PC-3 (cell line): ENCODE measurements at regions of chr12 and their contacts with region 1.

Region 1: DNA sequence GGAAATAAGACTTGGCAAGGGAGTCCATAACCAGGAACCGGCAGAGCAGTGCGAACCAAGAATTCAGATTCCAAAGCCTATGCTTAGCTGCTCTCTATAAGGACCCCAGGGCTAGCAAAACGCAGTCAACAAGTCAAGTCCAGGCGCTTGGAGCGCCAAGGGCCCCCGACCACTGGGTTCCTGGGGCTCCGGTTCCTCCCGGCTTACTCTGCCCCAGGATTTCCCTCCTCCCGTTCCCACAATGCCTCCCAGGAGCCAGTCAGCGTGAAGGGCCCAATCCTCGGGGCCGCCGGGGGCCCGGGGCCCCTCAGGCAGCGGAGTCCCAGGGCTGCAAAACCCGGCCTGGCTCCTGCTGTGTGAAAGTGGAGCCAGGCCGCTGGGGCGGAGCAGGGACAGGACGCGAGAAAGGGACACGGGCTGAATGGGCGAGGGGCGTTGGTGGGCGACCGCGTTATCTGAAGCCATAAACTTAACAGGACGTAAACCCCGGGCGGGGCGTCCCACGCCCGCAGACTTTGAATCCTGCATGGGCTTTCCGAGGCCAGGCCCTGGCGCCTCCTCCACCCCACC is 1.5 kb downstream of the KRT8 start:
- DNase-seq: peak; percentile 76
- ATAC-seq: peak; percentile 48
- H3K4me3 ChIP-seq: peak overlapping the region; percentile 100
- H3K27ac ChIP-seq: no peak overlapping the region
- H3K4me1 ChIP-seq: peaks cover 61% of the 10 kb centered on the region
- H3K27me3 ChIP-seq: no peaks in the 10 kb centered on the region
- CTCF ChIP-seq: no peak

Region 2: DNA sequence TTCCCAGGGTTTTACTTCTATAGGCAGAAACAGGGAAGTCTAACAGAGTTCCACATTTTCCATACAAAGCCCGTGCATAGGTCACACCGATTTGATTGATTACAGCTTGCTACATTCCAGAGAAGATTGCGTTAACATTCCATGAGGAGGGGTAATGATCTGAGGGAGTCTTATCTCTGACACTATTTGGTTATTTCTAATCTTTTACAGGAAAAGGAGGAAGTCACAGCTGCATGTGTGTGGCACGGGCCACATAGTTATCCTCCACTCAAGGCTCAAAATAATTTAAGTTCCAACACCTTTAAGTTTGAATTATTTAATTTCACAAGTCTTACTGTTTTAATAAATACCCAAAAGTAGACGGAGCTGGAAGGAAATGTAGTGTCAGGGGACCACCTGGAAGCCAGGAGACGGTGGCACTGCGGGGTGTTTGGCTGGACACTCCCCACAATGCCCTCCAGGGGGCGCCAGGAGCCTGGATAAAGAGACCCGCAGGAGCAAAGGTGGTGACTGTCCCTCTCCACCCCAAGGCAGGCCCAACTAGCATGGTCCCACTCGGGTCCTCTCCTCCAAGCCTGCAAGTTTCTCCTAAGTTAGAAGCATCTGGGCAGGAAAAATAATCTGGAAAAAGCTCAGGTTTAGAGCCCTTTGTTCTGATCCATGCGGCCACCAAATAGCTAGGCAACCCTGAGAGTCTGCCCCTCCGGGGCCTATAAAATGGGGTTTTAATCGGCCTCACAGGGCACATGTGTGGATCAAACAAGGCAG is 18.7 kb before region 1 on chr12:
- CTCF ChIA-PET with region 1: interaction called, 3 read pairs
- POLR2A ChIA-PET with region 1: no interaction called
- intact Hi-C with region 1: loop called (anchors 2 kb)
- DNase-seq: peak; percentile 80
- ATAC-seq: peak; percentile 77
- H3K4me3 ChIP-seq: no peak overlapping the region
- H3K27ac ChIP-seq: no peak overlapping the region
- H3K4me1 ChIP-seq: no peaks in the 10 kb centered on the region
- H3K27me3 ChIP-seq: no peaks in the 10 kb centered on the region
- CTCF ChIP-seq: peak; percentile 96

Region 3: DNA sequence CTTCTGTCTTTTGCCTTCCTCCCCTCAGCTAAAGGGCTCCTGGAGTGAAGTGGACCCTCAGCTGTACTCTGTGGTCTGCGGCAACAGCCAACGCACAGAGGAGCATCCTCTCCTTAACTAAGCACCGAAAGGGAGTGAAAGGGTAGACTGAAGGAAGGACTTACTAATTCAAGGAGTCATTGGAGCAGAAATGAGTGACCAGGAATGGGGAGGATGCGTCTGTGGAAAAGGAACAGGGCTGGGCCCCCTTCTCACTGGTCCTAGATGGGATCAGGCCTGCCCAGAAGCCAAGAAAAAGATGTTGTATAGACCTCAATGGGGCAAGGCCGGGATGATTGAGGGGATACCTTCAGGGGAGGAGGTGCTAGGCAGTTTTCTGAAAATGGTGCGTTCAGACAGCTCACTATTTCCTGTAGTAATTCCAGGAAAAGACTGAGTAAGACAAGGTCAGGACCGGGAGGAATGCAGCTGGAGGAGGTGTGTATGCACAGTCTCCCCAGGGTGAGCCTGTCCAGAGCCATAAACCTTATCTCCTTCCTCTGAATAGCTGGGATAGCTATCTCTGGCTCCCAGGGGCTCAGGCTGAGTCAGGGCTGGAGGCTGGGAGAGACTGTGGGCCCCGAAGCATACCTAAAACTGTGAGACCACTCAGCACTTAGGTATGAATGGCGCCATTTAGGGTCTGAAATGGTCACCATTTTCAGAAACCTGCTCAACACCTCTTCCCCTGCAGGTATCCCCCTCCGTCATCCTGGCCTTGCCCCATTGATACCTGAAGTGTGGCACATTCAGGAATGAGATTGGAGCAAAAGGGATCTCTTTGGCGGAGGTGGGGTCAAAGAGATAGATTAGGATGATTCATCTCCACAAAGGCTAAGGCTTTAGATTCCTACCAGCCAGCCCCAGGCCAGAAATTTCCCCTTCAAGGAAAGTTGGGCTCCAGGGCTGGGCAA is 21.7 kb after region 1 on chr12:
- CTCF ChIA-PET with region 1: interaction called, 24 read pairs
- POLR2A ChIA-PET with region 1: interaction called, 44 read pairs
- intact Hi-C with region 1: loop called (anchors 1 kb)
- DNase-seq: peak; percentile 89
- ATAC-seq: peak; percentile 52
- H3K4me3 ChIP-seq: peak overlapping the region; percentile 47
- H3K27ac ChIP-seq: peak overlapping the region; percentile 98
- H3K4me1 ChIP-seq: peaks cover 38% of the 10 kb centered on the region
- H3K27me3 ChIP-seq: no peaks in the 10 kb centered on the region
- CTCF ChIP-seq: no peak

Region 4: GRCh38 chr12:52949413-52950331 is 46.3 kb after region 1 on chr12:
- CTCF ChIA-PET with region 1: interaction called, 7 read pairs
- POLR2A ChIA-PET with region 1: interaction called, 14 read pairs
- intact Hi-C with region 1: loop called (anchors 1 kb)
- DNase-seq: peak; percentile 96
- ATAC-seq: peak; percentile 78
- H3K4me3 ChIP-seq: peak overlapping the region; percentile 94
- H3K27ac ChIP-seq: peak overlapping the region; percentile 84
- H3K4me1 ChIP-seq: peaks cover 57% of the 10 kb centered on the region
- H3K27me3 ChIP-seq: no peaks in the 10 kb centered on the region
- CTCF ChIP-seq: no peak

Region 5: GRCh38 chr12:52980693-52981423 is 77.5 kb after region 1 on chr12:
- CTCF ChIA-PET with region 1: interaction called, 22 read pairs
- POLR2A ChIA-PET with region 1: interaction called, 5 read pairs
- intact Hi-C with region 1: loop called (anchors 1 kb)
- DNase-seq: peak; percentile 96
- ATAC-seq: peak; percentile 84
- H3K4me3 ChIP-seq: no peak overlapping the region
- H3K27ac ChIP-seq: no peak overlapping the region
- H3K4me1 ChIP-seq: no peaks in the 10 kb centered on the region; the same call in 1 of the 2 replicates
- H3K27me3 ChIP-seq: no peaks in the 10 kb centered on the region
- CTCF ChIP-seq: peak; percentile 99

Region 6: DNA sequence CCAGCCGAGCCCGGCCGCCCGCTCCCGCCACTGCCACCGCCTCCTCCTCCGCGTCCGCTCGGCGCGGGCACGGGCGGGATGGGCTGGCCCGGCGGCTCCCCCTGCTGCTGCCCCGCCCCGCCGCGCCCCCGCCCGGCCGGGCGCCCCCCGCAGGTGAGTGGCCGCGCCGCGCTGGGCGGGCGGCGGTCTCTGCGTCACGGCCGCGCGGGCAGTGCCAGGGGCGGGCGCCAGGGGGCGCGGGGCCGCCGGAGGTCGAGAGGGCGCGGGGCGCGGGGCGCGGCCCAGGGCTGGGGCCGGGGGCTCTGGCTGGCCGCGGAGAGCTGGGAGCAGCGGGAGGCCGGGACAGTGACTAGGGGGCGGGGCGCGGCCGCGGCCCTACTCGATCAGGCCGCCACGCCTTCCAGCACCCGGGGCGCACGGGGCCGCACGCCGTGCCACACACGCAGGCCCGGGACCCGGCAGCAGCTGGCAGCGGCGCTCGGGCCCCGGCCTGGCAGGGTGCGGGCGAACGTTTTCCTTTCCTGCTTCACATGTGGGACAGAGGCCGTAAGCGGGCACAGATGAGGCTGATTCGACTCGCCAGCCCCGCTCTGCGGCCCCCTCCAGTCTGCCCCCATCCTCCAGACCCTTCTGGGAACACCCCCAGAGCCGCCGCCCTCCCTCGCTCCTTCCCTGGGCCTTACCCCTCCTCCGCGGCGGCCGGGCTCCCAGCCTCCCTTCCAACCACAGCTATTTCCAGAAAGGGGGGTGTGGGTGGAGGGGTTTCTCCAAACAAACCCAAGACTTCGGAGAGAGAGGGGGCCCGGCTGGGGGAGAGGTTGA is 144.1 kb after region 1 on chr12:
- CTCF ChIA-PET with region 1: no interaction called
- POLR2A ChIA-PET with region 1: interaction called, 23 read pairs
- intact Hi-C with region 1: no loop called
- DNase-seq: peak; percentile 73
- ATAC-seq: peak; percentile 38
- H3K4me3 ChIP-seq: peak overlapping the region; percentile 71
- H3K27ac ChIP-seq: peak overlapping the region; percentile 55
- H3K4me1 ChIP-seq: peaks cover 60% of the 10 kb centered on the region
- H3K27me3 ChIP-seq: no peaks in the 10 kb centered on the region
- CTCF ChIP-seq: no peak

Region 7: GRCh38 chr12:53079226-53080117 is 176.1 kb after region 1 on chr12 and contains the start of gene SPRYD3:
- CTCF ChIA-PET with region 1: no interaction called
- POLR2A ChIA-PET with region 1: interaction called, 11 read pairs
- intact Hi-C with region 1: no loop called
- DNase-seq: peak; percentile 97
- ATAC-seq: peak; percentile 96
- H3K4me3 ChIP-seq: peak within 1 kb of the TSS; percentile 76
- H3K27ac ChIP-seq: peak within 1 kb of the TSS; percentile 62
- H3K4me1 ChIP-seq: peaks cover 16% of the 10 kb centered on the region
- H3K27me3 ChIP-seq: no peaks in the 10 kb centered on the region
- CTCF ChIP-seq: no peak
- total RNA-seq, gene SPRYD3: 18.5 and 24.1 TPM in 2 replicates